Activated CD8-positive, alpha-beta T cell treated with anti-CD3 and anti-CD28 coated beads, Interleukin-2, amount 10 ng/mL, durations not matched to agents 7 days and 5 days (primary cell): ENCODE measurements at regions of chr5 and their contacts with region 1.

Region 1: GRCh38 chr5:54415896-54416601 is 39.5 kb upstream of the HSPB3 start:
- DNase-seq: no peak
- ATAC-seq: no peak
- H3K4me3 Mint-ChIP-seq: no peak overlapping the region
- H3K27ac Mint-ChIP-seq: no peak overlapping the region
- H3K4me1 Mint-ChIP-seq: no peaks in the 10 kb centered on the region
- H3K27me3 Mint-ChIP-seq: peaks cover 17% of the 10 kb centered on the region

Region 2: GRCh38 chr5:54243473-54244080 is 172.5 kb before region 1 on chr5:
- CTCF ChIA-PET with region 1: interaction called, 21 read pairs
- POLR2A ChIA-PET with region 1: no interaction called
- DNase-seq: peak; percentile 56
- ATAC-seq: no peak
- H3K4me3 Mint-ChIP-seq: no peak overlapping the region
- H3K27ac Mint-ChIP-seq: no peak overlapping the region
- H3K4me1 Mint-ChIP-seq: peaks cover 3% of the 10 kb centered on the region
- H3K27me3 Mint-ChIP-seq: peaks cover 6% of the 10 kb centered on the region

Region 3: GRCh38 chr5:54323495-54323894 is 92.6 kb before region 1 on chr5:
- CTCF ChIA-PET with region 1: no interaction called
- POLR2A ChIA-PET with region 1: no interaction called
- DNase-seq: no peak
- ATAC-seq: no peak
- H3K4me3 Mint-ChIP-seq: no peak overlapping the region
- H3K27ac Mint-ChIP-seq: no peak overlapping the region
- H3K4me1 Mint-ChIP-seq: peaks cover 13% of the 10 kb centered on the region
- H3K27me3 Mint-ChIP-seq: peaks cover 28% of the 10 kb centered on the region

Region 4: DNA sequence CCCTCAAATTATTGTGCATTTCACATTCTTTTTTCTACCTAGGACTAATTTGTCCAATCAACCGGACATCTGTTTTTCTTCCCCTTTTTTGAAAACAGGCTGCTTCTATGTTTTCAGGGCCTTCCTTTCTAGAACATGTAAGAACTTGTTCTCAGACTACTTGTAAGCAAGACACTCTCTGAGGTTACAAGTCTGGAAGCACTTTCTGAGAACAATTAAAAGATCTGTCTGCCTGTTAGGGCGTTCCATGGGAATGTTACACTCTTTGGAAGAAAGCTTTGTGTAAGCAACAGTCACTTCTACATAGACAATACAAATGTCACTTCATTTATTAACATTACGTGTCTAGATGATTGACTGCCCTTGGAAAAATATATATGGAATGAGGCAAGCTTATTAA is 11.5 kb before region 1 on chr5:
- CTCF ChIA-PET with region 1: interaction called, 21 read pairs
- POLR2A ChIA-PET with region 1: no interaction called
- DNase-seq: no peak
- ATAC-seq: no peak
- H3K4me3 Mint-ChIP-seq: no peak overlapping the region
- H3K27ac Mint-ChIP-seq: no peak overlapping the region
- H3K4me1 Mint-ChIP-seq: no peaks in the 10 kb centered on the region
- H3K27me3 Mint-ChIP-seq: peaks cover 6% of the 10 kb centered on the region

Region 5: DNA sequence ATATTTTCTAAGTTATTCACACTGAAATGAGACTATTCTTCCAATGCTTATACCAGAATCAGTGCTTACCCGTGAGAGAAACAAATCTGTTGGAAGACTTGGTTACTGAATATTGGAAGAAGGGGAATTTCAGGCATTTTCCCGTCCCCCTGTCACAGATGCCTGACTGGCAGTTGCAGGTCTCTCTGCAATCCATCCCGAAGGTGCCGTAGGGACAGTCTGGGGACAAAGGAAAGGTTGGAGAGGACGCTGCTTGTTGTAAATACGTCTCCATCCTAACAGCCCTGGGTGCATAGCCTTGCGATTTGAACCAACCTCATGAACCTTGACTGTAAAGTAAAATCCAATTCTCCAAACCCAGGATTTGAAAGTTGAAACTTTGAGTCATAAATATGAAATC is 565.9 kb after region 1 on chr5:
- CTCF ChIA-PET with region 1: no interaction called
- POLR2A ChIA-PET with region 1: no interaction called
- DNase-seq: no peak
- ATAC-seq: no peak
- H3K4me3 Mint-ChIP-seq: no peak overlapping the region
- H3K27ac Mint-ChIP-seq: no peak overlapping the region
- H3K4me1 Mint-ChIP-seq: peaks cover 34% of the 10 kb centered on the region
- H3K27me3 Mint-ChIP-seq: peaks cover 24% of the 10 kb centered on the region